Panc1 (cell line): ENCODE measurements at regions of chr10 and their contacts with region 1.

Region 1: GRCh38 chr10:69506834-69507721 is 55.8 kb downstream of the TSPAN15 start:
- DNase-seq: no peak
- ATAC-seq: peak; percentile 43
- H3K4me3 ChIP-seq: no peak overlapping the region
- H3K27ac ChIP-seq: peak overlapping the region; percentile 30
- H3K4me1 ChIP-seq: peaks cover 18% of the 10 kb centered on the region
- H3K27me3 ChIP-seq: no peaks in the 10 kb centered on the region
- CTCF ChIP-seq: no peak

Region 2: DNA sequence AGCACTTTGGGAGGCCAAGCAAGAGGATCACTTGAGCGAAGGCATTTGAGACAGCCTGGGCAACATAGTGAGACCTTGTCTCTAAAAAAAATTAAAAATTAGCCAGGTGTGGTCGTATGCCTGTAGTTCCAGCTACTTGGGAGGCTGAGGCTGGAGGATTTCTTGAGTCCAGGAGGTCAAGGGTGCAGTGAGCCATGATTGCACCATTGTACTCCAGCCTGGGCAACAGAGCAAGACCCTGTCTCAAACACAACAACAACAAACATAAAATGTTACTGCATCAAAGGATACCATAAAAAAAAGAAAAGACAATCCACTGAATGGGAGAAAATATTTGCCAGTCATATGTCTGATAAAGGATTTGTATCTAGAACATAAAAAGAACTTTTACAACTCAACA is 150.9 kb before region 1 on chr10:
- CTCF ChIA-PET with region 1: interaction called, 12 read pairs
- POLR2A ChIA-PET with region 1: no interaction called
- in situ Hi-C with region 1: no loop called
- intact Hi-C with region 1: no loop called
- DNase-seq: no peak
- ATAC-seq: no peak
- H3K4me3 ChIP-seq: no peak overlapping the region
- H3K27ac ChIP-seq: no peak overlapping the region
- H3K4me1 ChIP-seq: peaks cover 11% of the 10 kb centered on the region
- H3K27me3 ChIP-seq: no peaks in the 10 kb centered on the region
- CTCF ChIP-seq: no peak

Region 3: DNA sequence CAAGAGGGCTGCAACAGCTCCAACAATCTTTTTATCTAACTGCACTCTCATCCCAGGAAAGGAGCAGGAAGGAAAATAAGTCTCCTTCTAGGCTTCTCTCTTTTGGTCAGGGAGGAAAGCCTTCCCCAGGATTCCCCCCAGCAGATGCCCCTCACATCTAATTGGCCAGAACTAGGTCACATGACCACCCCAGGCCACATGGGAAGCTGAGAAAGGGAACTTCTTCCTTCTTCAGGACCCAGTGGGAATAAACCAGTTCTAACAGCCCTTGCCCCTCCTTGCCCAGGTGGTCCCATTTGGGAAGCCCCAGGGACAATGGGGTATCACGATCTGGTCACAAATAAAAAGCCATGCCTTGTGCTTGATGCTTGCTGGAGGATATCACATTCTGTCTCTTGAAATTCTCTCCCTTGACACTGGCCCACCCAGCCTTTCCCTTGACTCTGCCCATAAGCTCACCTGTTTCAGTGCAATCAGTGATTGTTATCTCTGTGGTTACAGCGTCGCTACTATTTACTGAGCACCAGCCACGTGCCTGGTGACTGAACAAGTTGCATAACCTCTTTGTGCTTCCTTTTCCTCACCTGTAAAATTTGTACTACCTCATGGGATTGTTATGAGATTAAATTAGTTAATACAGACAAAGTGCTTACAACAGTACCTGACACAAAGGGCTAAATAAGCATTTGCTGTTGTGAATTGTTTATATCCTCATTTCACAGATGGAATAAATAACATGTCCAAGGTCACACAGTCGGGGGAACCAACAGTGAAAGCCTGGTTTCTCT is 81.4 kb before region 1 on chr10:
- CTCF ChIA-PET with region 1: interaction called, 10 read pairs
- POLR2A ChIA-PET with region 1: no interaction called
- in situ Hi-C with region 1: no loop called
- intact Hi-C with region 1: no loop called
- DNase-seq: no peak
- ATAC-seq: no peak
- H3K4me3 ChIP-seq: no peak overlapping the region
- H3K27ac ChIP-seq: peak overlapping the region; percentile 39; the same call in 1 of the 2 replicates
- H3K4me1 ChIP-seq: peaks cover 25% of the 10 kb centered on the region
- H3K27me3 ChIP-seq: no peaks in the 10 kb centered on the region
- CTCF ChIP-seq: no peak

Region 4: DNA sequence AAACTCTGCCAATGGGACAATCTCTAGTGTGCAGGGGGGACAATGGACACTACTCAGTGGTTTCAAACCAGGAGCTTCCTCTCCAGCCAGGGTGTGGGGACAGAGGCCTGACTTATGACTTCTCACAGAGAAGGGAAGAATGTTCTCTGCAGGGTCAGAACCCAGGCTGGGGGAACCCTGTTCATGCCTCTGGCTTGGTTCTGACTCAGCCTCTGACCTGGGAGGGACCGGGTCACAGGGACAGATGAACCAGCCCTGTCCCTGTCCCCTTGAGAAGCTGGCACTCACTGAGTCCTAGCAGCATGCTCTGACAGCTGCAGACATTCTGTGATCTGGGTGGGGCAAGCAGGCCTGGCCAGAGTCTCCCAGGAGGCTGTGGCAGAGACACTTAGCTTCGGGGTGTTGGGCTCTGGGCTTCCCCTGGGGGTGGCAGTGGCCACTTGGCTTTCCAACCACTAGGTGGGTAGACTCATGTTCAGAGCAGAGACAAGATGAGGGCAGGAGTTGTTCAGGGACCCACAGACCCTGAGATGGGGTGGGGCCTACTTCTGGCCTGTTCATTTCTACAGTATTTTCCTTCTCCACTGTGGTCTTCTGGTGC is 42.2 kb before region 1 on chr10:
- CTCF ChIA-PET with region 1: interaction called, 12 read pairs
- POLR2A ChIA-PET with region 1: no interaction called
- in situ Hi-C with region 1: no loop called
- intact Hi-C with region 1: no loop called
- DNase-seq: no peak
- ATAC-seq: peak; percentile 51
- H3K4me3 ChIP-seq: no peak overlapping the region
- H3K27ac ChIP-seq: peak overlapping the region; percentile 68
- H3K4me1 ChIP-seq: peaks cover 92% of the 10 kb centered on the region
- H3K27me3 ChIP-seq: no peaks in the 10 kb centered on the region
- CTCF ChIP-seq: no peak